Calu3 (cell line): ENCODE measurements at regions of chr6 and their contacts with region 1.

Region 1: DNA sequence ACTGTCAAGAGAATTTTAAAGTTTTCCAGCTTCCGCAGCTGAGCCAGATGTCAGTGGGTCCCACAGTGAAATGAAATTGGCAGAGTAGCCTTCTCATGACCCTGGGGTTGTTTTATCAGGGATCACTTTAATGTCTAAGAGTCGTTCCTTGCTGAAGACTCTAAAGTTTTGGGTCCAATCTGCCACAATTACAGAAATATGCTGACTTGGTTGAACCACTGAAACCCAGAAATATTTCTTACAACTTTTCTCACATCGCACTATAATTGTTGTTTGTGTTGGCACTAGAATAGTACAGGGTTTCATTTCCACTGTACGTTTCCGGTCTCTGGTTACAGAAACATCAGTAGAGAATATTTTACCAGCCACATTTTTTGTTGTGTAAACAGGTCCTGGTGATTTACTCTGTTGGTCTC is 109.0 kb downstream of the HMGCLL1 start:
- DNase-seq: no peak
- H3K4me3 Mint-ChIP-seq: no peak overlapping the region
- H3K27ac Mint-ChIP-seq: no peak overlapping the region
- H3K4me1 Mint-ChIP-seq: peaks cover under 1% of the 10 kb centered on the region
- H3K27me3 Mint-ChIP-seq: no peaks in the 10 kb centered on the region
- CTCF ChIP-seq: no peak

Region 2: GRCh38 chr6:55604021-55604420 is 134.1 kb after region 1 on chr6:
- CTCF ChIA-PET with region 1: no interaction called
- intact Hi-C with region 1: loop called (anchors 10 kb)
- DNase-seq: no peak
- H3K4me3 Mint-ChIP-seq: no peak overlapping the region
- H3K27ac Mint-ChIP-seq: no peak overlapping the region
- H3K4me1 Mint-ChIP-seq: no peaks in the 10 kb centered on the region
- H3K27me3 Mint-ChIP-seq: no peaks in the 10 kb centered on the region
- CTCF ChIP-seq: no peak

Region 3: DNA sequence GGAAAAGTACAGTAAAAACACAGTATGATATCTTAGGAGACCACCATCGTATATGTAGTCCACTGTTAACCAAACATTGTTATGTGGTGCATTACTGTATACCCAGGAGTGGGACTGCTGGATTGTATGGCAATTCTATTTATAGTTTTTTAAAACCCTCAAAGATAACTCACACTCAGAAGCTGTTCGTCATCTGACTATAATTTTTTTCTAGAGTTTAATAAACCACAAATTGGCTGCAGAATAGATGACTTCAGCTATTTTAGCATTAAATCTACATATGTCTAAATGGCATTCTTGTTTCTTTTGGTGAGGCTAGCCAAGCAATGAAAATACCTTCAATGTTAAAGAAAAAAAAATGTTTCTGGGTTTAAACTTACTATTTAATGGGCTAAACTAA is 539.7 kb after region 1 on chr6:
- CTCF ChIA-PET with region 1: no interaction called
- intact Hi-C with region 1: no loop called
- DNase-seq: no peak
- H3K4me3 Mint-ChIP-seq: no peak overlapping the region
- H3K27ac Mint-ChIP-seq: no peak overlapping the region
- H3K4me1 Mint-ChIP-seq: no peaks in the 10 kb centered on the region
- H3K27me3 Mint-ChIP-seq: peaks cover 3% of the 10 kb centered on the region
- CTCF ChIP-seq: no peak